AG04450 (cell line): ENCODE measurements at regions of chr19 and their contacts with region 1.

Region 1: GRCh38 chr19:13466697-13467096 is 39.6 kb downstream of the CACNA1A start:
- DNase-seq: no peak
- H3K4me3 ChIP-seq: no peak overlapping the region
- H3K27ac ChIP-seq: no peak overlapping the region
- H3K27me3 ChIP-seq: no peaks in the 10 kb centered on the region
- CTCF ChIP-seq: no peak

Region 2: DNA sequence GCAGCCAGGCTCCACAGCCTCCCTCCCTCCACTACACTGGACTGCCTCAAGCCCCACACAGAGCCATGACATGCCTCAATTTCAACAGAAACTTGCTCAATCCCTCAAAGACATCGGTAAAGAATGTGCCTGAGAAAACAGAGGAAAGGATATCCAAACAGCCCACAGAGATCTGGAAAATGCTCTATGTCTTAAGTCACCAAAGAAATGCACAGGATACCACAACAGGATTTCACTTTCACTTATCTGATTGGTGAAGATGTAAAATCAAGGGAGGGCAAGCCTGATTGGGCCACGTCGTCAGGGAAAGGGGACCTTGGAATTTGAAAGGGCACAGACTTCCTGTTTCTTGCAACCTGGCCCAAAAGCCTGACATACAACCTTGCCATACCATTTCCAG is 25.4 kb after region 1 on chr19:
- CTCF ChIA-PET with region 1: interaction called, 14 read pairs
- POLR2A ChIA-PET with region 1: no interaction called
- DNase-seq: peak; percentile 86
- H3K4me3 ChIP-seq: no peak overlapping the region; the same call in 1 of the 2 replicates
- H3K27ac ChIP-seq: peak overlapping the region; percentile 87
- H3K27me3 ChIP-seq: no peaks in the 10 kb centered on the region
- CTCF ChIP-seq: no peak